Panc1 (cell line): ENCODE measurements at regions of chr20 and their contacts with region 1.

Region 1: GRCh38 chr20:653110-653589 is at the start of gene SRXN1:
- DNase-seq: no peak
- ATAC-seq: peak; percentile 95
- H3K4me3 ChIP-seq: peak within 1 kb of the TSS; percentile 83 to 97
- H3K27ac ChIP-seq: peak within 1 kb of the TSS; percentile 88
- H3K4me1 ChIP-seq: peaks cover 17% of the 10 kb centered on the region
- H3K27me3 ChIP-seq: no peaks in the 10 kb centered on the region
- CTCF ChIP-seq: peak; percentile 92
- total RNA-seq, gene SRXN1: 34.5 TPM

Region 2: DNA sequence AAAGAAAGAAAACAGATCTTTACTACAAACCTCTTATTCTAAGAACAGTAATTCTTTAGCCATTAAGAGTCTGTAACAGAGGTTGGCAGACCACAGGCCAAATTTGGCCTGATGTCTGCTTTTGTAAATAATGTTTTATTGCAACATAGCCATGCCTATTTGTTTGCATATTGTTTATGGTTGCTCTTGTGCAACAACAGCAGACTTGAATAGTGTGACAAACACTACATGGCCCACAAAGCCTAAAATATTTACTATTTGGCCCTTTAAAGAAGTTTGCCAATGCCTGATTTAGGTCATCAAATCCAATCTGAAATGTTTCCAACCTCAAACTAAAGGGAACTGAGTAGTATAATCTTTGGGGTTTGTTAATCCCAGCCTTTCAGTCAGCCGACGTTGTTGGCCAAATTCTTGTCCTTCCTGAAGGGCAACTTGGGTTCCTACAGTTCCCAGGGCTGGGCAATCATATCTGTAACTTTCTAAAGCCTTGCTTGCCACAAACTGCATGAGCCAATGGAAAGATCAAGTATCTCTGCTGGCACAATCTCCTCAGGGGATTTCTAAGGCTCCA is 156.9 kb before region 1 on chr20:
- CTCF ChIA-PET with region 1: no interaction called
- POLR2A ChIA-PET with region 1: no interaction called
- in situ Hi-C with region 1: no loop called
- intact Hi-C with region 1: no loop called
- DNase-seq: no peak
- ATAC-seq: no peak
- H3K4me3 ChIP-seq: no peak overlapping the region
- H3K27ac ChIP-seq: no peak overlapping the region
- H3K4me1 ChIP-seq: no peaks in the 10 kb centered on the region
- H3K27me3 ChIP-seq: no peaks in the 10 kb centered on the region
- CTCF ChIP-seq: no peak

Region 3: DNA sequence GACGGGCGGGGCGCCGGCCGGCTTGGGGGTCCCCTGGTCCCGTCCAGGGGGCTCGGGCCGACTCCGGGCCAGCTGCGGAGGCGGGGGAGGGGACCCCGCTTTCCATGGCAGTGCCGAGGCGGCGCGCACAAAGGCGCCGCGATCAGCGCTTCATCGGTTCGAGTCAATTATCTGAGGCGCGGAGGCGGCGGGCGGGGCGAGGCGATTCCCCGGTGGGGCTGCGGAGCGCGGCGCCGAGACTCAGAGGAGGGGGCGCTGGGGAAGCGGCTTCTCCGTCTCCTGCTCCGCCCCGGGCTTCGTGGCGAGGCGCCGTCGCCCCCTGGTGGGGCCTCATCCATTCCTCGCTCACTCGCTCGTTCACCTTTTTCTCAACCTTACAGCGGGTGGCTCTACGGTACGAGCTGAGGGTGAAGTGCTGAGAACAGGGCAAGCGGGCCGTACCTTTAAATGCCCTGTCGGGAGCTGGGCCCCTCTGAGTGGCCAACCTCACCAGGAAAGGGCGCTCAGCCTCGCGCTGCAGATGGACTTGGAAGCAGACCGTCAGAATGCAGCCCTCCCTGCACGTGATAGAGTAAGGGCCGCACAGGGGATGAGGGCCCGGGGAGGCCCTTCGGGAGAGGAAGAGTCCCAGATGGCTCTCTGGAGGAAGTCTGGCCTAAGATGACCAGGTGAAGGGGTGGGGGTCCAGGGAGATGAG is 75.2 kb after region 1 on chr20:
- CTCF ChIA-PET with region 1: no interaction called
- POLR2A ChIA-PET with region 1: no interaction called
- in situ Hi-C with region 1: no loop called
- intact Hi-C with region 1: loop called (anchors 2 kb)
- DNase-seq: peak; percentile 17
- ATAC-seq: peak; percentile 96
- H3K4me3 ChIP-seq: peak overlapping the region; percentile 48 to 54
- H3K27ac ChIP-seq: no peak overlapping the region
- H3K4me1 ChIP-seq: no peaks in the 10 kb centered on the region
- H3K27me3 ChIP-seq: peaks cover 3% of the 10 kb centered on the region
- CTCF ChIP-seq: peak; percentile 94

Region 4: DNA sequence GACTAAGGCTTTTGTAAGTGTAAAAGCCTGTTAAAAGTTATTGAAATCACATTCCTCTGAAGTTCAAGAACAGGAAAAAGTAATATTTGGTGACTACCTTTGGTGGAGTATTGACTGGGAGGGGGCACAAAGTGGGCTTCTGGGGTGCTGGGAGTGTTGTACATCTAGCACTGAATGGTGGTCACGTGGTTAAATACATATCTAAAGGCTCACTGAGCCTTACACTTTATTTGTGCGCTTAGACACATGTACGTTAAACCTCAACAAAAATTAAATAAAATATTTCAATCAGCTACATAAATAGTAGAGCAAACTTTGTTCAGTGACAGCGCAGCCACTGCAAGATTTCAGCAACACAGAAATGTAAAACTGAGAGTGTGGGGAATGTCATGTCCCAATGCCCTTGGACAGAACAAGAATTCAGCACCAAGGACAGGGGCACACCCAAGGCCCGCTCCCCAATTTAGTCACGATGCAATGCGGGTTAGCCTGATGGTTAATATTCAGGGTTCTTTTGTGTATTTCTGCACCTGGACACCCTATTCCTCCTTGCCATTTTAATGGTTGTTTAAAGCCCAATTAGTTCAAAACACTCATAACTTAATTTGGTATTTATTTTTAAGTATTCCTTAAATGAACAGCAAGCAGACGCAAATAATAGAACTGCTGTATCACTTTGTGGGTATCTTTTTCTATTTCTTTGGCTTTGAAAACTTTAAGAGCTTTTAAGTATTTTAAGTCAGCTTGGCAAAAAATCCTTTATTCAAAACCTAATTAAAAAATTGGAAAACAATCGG is 225.6 kb after region 1 on chr20:
- CTCF ChIA-PET with region 1: no interaction called
- POLR2A ChIA-PET with region 1: no interaction called
- in situ Hi-C with region 1: no loop called
- intact Hi-C with region 1: no loop called
- DNase-seq: no peak
- ATAC-seq: no peak
- H3K4me3 ChIP-seq: no peak overlapping the region
- H3K27ac ChIP-seq: no peak overlapping the region
- H3K4me1 ChIP-seq: peaks cover 5% of the 10 kb centered on the region; the same call in 1 of the 2 replicates
- H3K27me3 ChIP-seq: no peaks in the 10 kb centered on the region
- CTCF ChIP-seq: no peak